ENCODE measurements at regions of chr7 and their contacts with region 1.

Region 1: DNA sequence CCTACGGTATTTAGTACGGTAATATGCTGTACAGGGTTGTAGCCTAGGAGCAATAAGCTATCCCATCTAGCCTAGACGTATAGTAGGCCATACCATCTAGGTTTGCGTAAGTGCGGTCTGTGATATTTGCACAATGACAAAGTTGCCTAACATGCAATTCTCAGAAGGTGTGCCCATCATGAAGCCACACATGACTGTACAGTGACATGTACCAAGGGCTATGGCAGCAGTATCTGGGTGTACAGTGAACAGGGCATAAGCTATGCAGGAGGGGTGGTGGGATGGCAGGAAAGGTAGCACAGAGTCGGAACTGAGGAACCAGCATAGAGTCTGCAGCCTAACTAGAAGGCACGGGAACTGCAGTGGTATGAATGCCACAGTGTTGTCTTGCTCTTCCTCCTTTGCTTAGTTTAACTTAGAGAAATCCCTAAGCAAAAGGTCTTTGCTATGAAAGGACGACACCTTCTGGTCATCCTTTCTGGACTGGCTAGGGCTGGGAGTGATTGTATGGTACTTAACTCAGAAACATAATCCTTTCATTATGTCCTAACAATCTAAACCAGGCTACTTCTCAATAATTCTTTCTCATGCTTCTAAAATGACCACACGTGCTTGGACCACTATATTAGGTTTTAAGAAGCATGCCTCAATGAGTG is 93.5 kb downstream of the DYNC1I1 start:
- DNase-seq: peak in 1 of 2 experiments; percentile 27
- H3K4me3 ChIP-seq: no peak overlapping the region
- H3K4me3 Mint-ChIP-seq: no peak overlapping the region
- H3K27ac Mint-ChIP-seq: no peak overlapping the region
- H3K4me1 ChIP-seq: peaks cover 4% of the 10 kb centered on the region; the same call in 1 of the 2 replicates
- H3K4me1 Mint-ChIP-seq: no peaks in the 10 kb centered on the region
- H3K27me3 ChIP-seq: no peaks in the 10 kb centered on the region
- H3K27me3 Mint-ChIP-seq: no peaks in the 10 kb centered on the region
- CTCF ChIP-seq: peak; percentile 23 to 68

Region 2: GRCh38 chr7:95527033-95527775 is 338.6 kb before region 1 on chr7:
- CTCF ChIA-PET with region 1: no interaction called
- POLR2A ChIA-PET with region 1: no interaction called
- intact Hi-C with region 1: loop called (anchors 10 kb)
- DNase-seq: peak; percentile 71 to 74
- H3K4me3 ChIP-seq: no peak overlapping the region
- H3K4me3 Mint-ChIP-seq: no peak overlapping the region
- H3K27ac Mint-ChIP-seq: no peak overlapping the region
- H3K4me1 ChIP-seq: no peaks in the 10 kb centered on the region
- H3K4me1 Mint-ChIP-seq: no peaks in the 10 kb centered on the region
- H3K27me3 ChIP-seq: no peaks in the 10 kb centered on the region
- H3K27me3 Mint-ChIP-seq: peaks cover 4% of the 10 kb centered on the region
- CTCF ChIP-seq: peak; percentile 84 to 93

Region 3: DNA sequence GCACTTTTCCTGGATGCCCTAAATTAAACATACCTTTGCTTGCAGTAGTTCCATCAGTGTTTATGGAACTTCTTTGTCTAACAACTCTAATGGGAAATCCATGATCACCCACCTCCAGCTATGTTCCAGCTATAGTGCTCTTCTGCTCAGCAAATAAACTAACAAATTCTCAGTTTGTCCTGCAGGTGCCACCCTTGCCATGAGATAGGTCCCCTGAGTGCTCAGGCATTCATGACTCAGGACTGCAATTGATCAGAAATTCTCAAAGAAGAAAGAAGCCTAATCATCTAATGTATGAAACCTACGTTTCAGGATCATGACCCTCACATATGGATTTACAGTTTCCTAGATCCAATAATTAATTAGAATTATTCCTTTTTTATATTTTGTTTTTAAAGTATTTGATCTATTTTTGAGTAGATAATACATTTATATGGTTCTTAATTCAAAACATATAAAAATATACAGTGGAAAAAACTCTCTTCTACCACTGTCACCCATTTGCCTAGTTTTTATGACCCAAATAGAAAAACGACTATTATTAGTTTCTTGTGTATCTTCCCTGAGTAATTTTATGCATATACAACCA is 142.2 kb before region 1 on chr7:
- CTCF ChIA-PET with region 1: interaction called, 21 read pairs
- POLR2A ChIA-PET with region 1: no interaction called
- intact Hi-C with region 1: loop called (anchors 1 kb)
- DNase-seq: peak; percentile 58 to 61
- H3K4me3 ChIP-seq: no peak overlapping the region
- H3K4me3 Mint-ChIP-seq: no peak overlapping the region
- H3K27ac Mint-ChIP-seq: no peak overlapping the region
- H3K4me1 ChIP-seq: no peaks in the 10 kb centered on the region
- H3K4me1 Mint-ChIP-seq: no peaks in the 10 kb centered on the region
- H3K27me3 ChIP-seq: no peaks in the 10 kb centered on the region; the same call in 1 of the 2 replicates
- H3K27me3 Mint-ChIP-seq: peaks cover 17% of the 10 kb centered on the region
- CTCF ChIP-seq: peak; percentile 58 to 70

Region 4: GRCh38 chr7:95794917-95795515 is 70.8 kb before region 1 on chr7:
- CTCF ChIA-PET with region 1: interaction called, 17 read pairs
- POLR2A ChIA-PET with region 1: no interaction called
- intact Hi-C with region 1: loop called (anchors 1 kb)
- DNase-seq: peak in 1 of 2 experiments; percentile 37
- H3K4me3 ChIP-seq: no peak overlapping the region
- H3K4me3 Mint-ChIP-seq: no peak overlapping the region
- H3K27ac Mint-ChIP-seq: no peak overlapping the region
- H3K4me1 ChIP-seq: no peaks in the 10 kb centered on the region
- H3K4me1 Mint-ChIP-seq: no peaks in the 10 kb centered on the region
- H3K27me3 ChIP-seq: no peaks in the 10 kb centered on the region
- H3K27me3 Mint-ChIP-seq: peaks cover 13% of the 10 kb centered on the region
- CTCF ChIP-seq: peak; percentile 51 to 60

Measured in Caco-2 (cell line).